PC-3 (cell line): ENCODE measurements at regions of chr15 and their contacts with region 1.

Region 1: DNA sequence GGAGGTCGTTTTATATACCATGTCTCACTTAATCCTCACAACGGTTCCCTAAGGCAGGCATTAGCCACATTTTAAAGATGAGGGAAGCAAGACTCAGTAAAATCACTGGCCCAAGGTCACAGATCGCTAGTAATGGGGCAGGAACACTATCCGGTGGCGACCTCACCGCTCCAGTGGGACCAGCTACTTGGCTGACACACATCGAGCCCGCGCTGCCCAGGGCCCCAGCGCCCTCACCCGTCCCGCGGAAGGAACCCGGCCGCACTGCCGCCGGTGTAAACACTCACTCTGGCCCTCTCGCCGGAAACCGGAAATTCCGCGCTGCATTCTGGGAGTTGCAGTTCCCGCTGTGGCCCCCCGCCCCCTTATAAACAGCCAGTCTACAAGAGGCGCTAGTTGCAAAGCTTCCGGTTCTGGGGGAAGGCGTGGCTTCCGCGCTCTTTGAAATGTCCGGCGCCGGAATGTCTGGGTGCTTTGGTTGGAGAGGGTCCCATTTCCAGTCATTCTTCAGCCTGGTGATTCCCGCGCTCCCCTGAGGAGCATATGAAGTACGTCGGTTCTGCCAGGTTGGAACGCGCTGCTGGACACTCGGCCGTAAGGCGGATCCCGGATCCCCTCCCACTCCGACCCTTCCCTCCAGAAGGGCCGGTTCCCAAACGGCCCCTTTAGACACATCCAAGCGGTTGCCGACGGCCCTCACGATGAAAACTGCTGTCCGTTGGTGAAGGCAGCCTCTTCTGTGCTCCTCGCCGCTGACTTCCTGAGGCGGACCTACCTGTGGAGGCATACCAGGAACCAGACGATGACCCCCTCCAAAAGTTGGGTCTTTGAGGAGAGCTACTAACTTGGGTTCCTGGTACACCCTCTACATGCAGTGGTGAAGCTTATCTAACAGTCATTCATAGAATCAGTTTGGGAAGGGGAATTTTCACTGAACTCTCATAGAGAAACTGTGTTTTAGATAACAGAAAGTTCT is at the start of gene UBL7:
- DNase-seq: peak; percentile 97
- ATAC-seq: peak; percentile 95
- H3K4me3 ChIP-seq: peak within 1 kb of the TSS; percentile 85
- H3K27ac ChIP-seq: peak within 1 kb of the TSS; percentile 57
- H3K4me1 ChIP-seq: 0 out of 2 replicates have a peak, but pooled peaks cover 5% of the 10 kb centered on the region
- H3K27me3 ChIP-seq: no peaks in the 10 kb centered on the region
- CTCF ChIP-seq: peak; percentile 42; the same call in 1 of the 2 replicates
- total RNA-seq, gene UBL7: 46.1 and 57.1 TPM in 2 replicates

Region 2: DNA sequence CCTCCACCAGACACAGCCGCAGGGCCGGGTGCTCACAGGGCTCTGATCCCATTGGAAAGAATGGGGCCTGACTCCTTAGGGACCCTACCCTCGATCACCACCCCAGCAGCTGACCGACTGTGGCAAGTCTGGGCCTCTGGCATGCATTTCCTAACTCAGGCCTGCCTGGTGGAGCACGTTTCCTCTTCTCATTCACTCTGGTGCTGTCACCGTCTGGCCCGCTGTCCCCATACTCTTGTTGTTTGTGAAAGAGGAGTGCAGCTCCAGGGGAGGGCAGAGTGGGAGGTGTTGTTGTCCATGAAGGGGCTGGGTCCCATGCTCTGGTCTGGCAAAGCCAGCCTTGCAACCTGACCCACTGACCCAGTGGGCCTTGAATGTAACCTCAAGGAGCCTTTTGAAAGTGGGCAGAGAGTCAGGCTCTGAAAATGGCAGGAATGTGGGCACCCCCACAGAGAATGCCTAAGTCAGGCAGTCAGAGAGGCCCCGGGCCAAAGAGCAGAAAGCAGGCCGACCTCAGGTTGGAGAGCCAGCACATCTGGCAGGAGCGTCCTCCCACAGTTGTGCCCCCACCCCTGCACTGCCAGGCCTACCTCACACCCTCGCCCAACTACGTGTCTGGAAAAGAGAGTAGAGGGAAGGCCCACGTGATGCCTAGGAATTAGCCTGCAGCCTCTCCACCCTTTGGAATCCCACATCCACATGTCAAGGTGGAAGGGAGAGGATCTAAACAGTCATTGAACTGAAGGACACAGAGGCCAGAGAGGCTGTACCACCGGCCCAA is 38.3 kb before region 1 on chr15:
- CTCF ChIA-PET with region 1: no interaction called
- POLR2A ChIA-PET with region 1: no interaction called
- intact Hi-C with region 1: no loop called
- DNase-seq: peak; percentile 24
- ATAC-seq: no peak; the same call in 1 of the 2 replicates
- H3K4me3 ChIP-seq: no peak overlapping the region
- H3K27ac ChIP-seq: peak overlapping the region; percentile 38
- H3K4me1 ChIP-seq: peaks cover 75% of the 10 kb centered on the region
- H3K27me3 ChIP-seq: no peaks in the 10 kb centered on the region
- CTCF ChIP-seq: no peak

Region 3: DNA sequence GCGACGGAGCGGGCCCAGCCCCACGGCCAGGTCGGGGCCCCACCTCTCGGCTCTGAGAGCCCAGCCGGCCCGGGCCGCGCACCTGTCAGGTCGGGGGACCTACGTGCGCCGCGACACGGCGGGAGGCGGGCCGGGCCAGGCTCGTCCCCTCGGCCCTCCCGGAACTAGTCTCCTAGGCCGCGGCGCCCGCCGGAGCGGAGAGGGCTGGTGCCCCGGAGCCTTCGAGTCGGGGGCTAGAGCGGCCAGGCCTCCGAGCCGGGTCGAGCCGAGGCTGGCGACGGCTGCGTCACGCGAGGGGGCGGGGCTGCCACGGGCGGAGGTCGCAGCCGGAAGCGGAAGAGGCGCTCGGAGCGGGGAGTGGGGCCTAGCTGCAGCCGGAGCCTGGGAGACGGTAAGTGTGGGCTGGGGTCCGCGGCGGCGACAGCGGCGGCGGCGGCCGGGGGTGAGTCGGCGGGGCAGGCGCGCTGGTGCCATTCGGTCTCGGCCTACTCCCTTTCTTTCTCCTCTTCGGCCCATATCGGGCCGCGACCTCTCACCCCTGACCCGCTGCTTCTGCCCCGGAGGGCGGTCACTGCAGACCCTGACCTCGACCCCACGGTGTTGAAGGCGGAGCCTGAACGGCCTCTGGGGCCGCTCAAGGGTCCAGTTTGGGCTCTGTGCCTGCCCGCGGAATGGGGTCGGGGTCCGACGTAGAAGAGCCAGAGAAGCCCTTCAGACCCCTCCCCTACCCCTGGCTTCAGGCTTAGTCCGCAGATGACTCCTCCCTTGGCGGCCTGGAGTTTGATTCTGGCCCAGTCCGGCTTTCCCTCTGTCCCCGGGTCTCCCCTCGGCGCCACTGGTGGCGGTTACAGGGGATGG is 154.6 kb after region 1 on chr15 and contains the start of gene CLK3:
- CTCF ChIA-PET with region 1: no interaction called
- POLR2A ChIA-PET with region 1: interaction called, 5 read pairs
- intact Hi-C with region 1: loop called (anchors 2 kb)
- DNase-seq: peak; percentile 95
- ATAC-seq: peak; percentile 89
- H3K4me3 ChIP-seq: peak within 1 kb of the TSS; percentile 100
- H3K27ac ChIP-seq: peak within 1 kb of the TSS; percentile 68
- H3K4me1 ChIP-seq: peaks cover 16% of the 10 kb centered on the region
- H3K27me3 ChIP-seq: no peaks in the 10 kb centered on the region
- CTCF ChIP-seq: no peak
- total RNA-seq, gene CLK3: 56.2 and 64.1 TPM in 2 replicates